Heart left ventricle (tissue), 16 donors: ENCODE measurements at regions of chr19 and their contacts with region 1.

Region 1: DNA sequence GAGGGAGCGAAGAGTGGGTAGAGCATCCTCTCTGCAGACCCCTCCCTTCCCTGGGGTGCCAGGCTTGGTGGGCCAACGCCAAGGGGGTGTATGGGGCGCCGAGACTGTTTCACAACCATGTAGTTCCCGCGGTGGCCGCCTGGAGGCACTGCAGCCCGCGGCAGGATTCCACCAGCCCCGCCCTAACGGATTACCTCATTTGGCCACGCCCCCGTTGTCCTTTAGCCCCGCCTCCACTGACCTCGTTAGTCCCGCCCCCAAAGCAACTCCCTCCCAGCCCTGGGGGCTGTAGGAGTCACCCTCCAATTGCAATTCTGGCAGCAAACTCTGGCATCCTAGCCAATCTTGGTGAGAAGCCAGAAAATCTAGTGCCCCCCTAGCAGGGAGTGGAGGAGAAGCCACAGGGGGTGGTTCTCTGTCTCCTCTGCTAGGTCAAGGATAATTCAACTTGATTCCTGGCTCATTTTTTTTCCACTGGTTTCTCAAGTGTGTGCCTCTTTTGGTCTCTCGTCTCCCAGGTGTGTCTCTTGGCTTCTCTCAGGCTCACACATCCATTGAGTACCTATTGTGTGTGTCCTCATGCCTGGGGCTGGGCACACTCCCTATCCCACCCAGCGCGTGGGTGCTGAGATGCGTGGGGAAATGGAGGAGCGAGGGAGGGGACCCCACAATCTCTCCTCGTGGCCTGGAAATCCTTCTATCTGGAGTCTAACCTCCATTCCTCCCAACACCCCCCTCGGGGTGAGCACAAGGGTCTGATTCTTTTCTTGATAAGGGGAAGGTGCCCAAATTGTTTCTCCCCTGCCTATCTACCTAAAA is 2.0 kb downstream of the OLFM2 start:
- DNase-seq: peak; percentile 49 to 85 (median 61)
- ATAC-seq: peak; percentile 35 to 88 (median 70)
- H3K4me3 ChIP-seq: no peak overlapping the region
- H3K27ac ChIP-seq: peak overlapping the region in 1 of 12 donors; percentile 7
- H3K4me1 ChIP-seq: peaks cover 0 to 29% (median 12%) of the 10 kb centered on the region in 12 donors
- H3K27me3 ChIP-seq: peaks cover 7 to 66% (median 40%) of the 10 kb centered on the region in 9 donors
- CTCF ChIP-seq: peak; percentile 65 to 84 (median 79)
- POLR2A ChIP-seq: no peak

Region 2: GRCh38 chr19:10027158-10027693 is 92.9 kb after region 1 on chr19:
- intact Hi-C with region 1: loop called (anchors 1 to 2 kb)
- DNase-seq: no peak
- ATAC-seq: peak in 1 of 4 donors; percentile 8
- H3K4me3 ChIP-seq: peak overlapping the region in 1 of 12 donors; percentile 17
- H3K27ac ChIP-seq: peak overlapping the region in 1 of 12 donors; percentile 20
- H3K4me1 ChIP-seq: peaks cover 0 to 9% (median 6%) of the 10 kb centered on the region in 12 donors
- H3K27me3 ChIP-seq: peaks cover 0 to 28% (median 3%) of the 10 kb centered on the region in 9 donors
- CTCF ChIP-seq: no peak
- POLR2A ChIP-seq: no peak

Region 3: GRCh38 chr19:10112895-10113591 is 178.7 kb after region 1 on chr19:
- intact Hi-C with region 1: loop called in 4 of 10 experiments (anchors 5 to 10 kb)
- DNase-seq: peak in 1 of 5 donors; percentile 71
- ATAC-seq: peak in 3 of 4 donors; percentile 8 to 37 (median 34)
- H3K4me3 ChIP-seq: peak overlapping the region in 1 of 12 donors; percentile 40
- H3K27ac ChIP-seq: peak overlapping the region in 1 of 12 donors; percentile 86
- H3K4me1 ChIP-seq: peaks cover 0 to 37% (median 0%) of the 10 kb centered on the region in 12 donors
- H3K27me3 ChIP-seq: no peaks in the 10 kb centered on the region
- CTCF ChIP-seq: peak; percentile 34 to 60 (median 46)
- POLR2A ChIP-seq: no peak

Region 4: DNA sequence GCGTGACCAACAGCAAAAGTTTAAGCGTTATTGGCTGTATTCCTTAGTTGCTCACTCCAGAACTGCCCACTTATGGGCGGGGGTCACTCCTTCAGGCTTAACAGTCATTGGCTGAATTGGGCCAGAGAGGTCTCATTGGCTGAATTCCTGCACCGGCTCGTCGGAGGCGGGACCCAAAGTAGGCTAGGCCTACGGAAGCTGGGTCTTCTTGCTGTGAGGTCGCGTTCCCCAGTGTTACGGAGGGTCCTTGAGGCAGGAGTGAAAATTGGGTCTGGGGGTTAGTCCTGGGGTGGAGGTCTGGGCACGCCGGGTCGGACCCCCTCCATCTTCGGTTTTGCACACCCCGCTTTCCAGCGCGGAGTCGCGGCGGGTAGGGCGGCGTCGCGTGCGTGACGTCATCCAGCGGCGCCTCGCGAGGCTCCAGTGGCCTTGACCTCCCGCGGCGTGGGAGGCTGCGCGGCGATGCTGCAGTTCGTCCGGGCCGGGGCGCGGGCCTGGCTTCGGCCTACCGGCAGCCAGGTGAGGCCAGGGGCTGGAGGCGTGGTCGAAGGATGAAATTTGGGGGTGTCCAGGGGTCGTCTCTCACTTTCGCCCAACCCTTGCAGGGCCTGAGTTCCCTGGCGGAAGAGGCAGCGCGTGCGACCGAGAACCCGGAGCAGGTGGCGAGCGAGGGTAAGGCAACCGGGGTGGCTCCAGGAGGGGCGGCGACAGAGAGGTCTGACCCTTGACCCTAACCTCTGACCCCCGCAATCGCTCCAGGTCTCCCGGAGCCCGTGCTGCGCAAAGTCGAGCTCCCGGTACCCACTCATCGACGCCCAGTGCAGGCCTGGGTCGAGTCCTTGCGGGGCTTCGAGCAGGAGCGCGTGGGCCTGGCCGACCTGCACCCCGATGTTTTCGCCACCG is 317.7 kb after region 1 on chr19 and contains the start of gene MRPL4:
- intact Hi-C with region 1: loop called (anchors 1 to 10 kb)
- DNase-seq: peak; percentile 94 to 98 (median 98)
- ATAC-seq: peak; percentile 95 to 96 (median 96)
- H3K4me3 ChIP-seq: peak within 1 kb of the TSS; percentile 60 to 99 (median 84)
- H3K27ac ChIP-seq: peak within 1 kb of the TSS; percentile 2 to 93 (median 84)
- H3K4me1 ChIP-seq: peaks cover 0 to 22% (median 8%) of the 10 kb centered on the region in 12 donors
- H3K27me3 ChIP-seq: no peaks in the 10 kb centered on the region
- CTCF ChIP-seq: no peak
- POLR2A ChIP-seq: peak in 1 of 2 donors; percentile 77
- total RNA-seq, gene MRPL4: 53.7 to 110 (median 68.2) TPM

Region 5: GRCh38 chr19:10388957-10389356 is 454.6 kb after region 1 on chr19:
- intact Hi-C with region 1: loop called in 6 of 10 experiments (anchors 2 to 10 kb)
- DNase-seq: peak; percentile 77 to 89 (median 85)
- ATAC-seq: peak; percentile 39 to 71 (median 62)
- H3K4me3 ChIP-seq: no peak overlapping the region
- H3K27ac ChIP-seq: no peak overlapping the region
- H3K4me1 ChIP-seq: peaks cover 0 to 13% (median 6%) of the 10 kb centered on the region in 12 donors
- H3K27me3 ChIP-seq: no peaks in the 10 kb centered on the region
- CTCF ChIP-seq: peak; percentile 88 to 98 (median 94)
- POLR2A ChIP-seq: no peak